Heart right ventricle (tissue), 16 donors: ENCODE measurements at regions of chr11 and their contacts with region 1.

Region 1: GRCh38 chr11:126446581-126446980 is 91.1 kb downstream of the ST3GAL4 start:
- DNase-seq: no peak
- ATAC-seq: no peak
- H3K4me3 ChIP-seq: no peak overlapping the region
- H3K27ac ChIP-seq: no peak overlapping the region
- H3K4me1 ChIP-seq: no peaks in the 10 kb centered on the region
- H3K27me3 ChIP-seq: peaks cover 0 to 8% (median 0%) of the 10 kb centered on the region in 7 donors
- CTCF ChIP-seq: no peak

Region 2: GRCh38 chr11:126416542-126417090 is 30.0 kb before region 1 on chr11:
- intact Hi-C with region 1: no loop called
- DNase-seq: peak; percentile 92 to 95
- ATAC-seq: peak; percentile 85 to 91 (median 88)
- H3K4me3 ChIP-seq: peak overlapping the region in 9 of 10 donors; percentile 27 to 55 (median 52)
- H3K27ac ChIP-seq: peak overlapping the region; percentile 70 to 93 (median 85)
- H3K4me1 ChIP-seq: peaks cover 26 to 90% (median 64%) of the 10 kb centered on the region in 9 donors
- H3K27me3 ChIP-seq: no peaks in the 10 kb centered on the region
- CTCF ChIP-seq: peak in 1 of 9 donors; percentile 8

Region 3: GRCh38 chr11:126480410-126481302 is 34.1 kb after region 1 on chr11:
- intact Hi-C with region 1: loop called (anchors 1 to 5 kb)
- DNase-seq: peak; percentile 68 to 87
- ATAC-seq: peak; percentile 80 to 91 (median 88)
- H3K4me3 ChIP-seq: peak overlapping the region in 3 of 10 donors; percentile 12 to 18 (median 17)
- H3K27ac ChIP-seq: peak overlapping the region in 8 of 10 donors; percentile 17 to 77 (median 56)
- H3K4me1 ChIP-seq: peaks cover 0 to 13% (median 5%) of the 10 kb centered on the region in 9 donors
- H3K27me3 ChIP-seq: no peaks in the 10 kb centered on the region
- CTCF ChIP-seq: peak; percentile 87 to 98 (median 95)

Region 4: DNA sequence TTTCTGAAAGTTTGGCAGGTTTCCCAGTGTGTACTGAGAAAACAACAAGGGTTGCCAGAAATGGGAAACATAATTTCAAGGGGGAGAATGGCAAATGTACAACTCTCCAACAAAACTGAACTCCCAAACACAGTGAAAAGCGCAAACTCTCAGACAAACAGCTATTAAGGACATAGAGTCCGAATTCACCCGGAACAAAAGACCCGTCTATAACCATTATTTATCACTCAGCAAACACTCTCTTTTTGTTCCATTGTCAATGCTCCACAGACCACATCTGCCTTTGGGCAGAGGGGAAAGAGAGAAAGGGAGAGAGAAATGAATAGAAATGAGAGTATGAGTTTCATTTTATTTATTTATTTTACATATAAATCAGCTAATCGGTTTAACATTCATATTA is 532.3 kb after region 1 on chr11:
- intact Hi-C with region 1: loop called in 1 of 10 experiments (anchors 5 kb)
- DNase-seq: no peak
- ATAC-seq: no peak
- H3K4me3 ChIP-seq: no peak overlapping the region
- H3K27ac ChIP-seq: no peak overlapping the region
- H3K4me1 ChIP-seq: no peaks in the 10 kb centered on the region
- H3K27me3 ChIP-seq: peaks cover 0 to 60% (median 21%) of the 10 kb centered on the region in 7 donors
- CTCF ChIP-seq: no peak